ENCODE measurements at regions of chr2 and their contacts with region 1.

Region 1: GRCh38 chr2:182077451-182078142 is 91.9 kb downstream of the PPP1R1C start:
- DNase-seq: peak in 2 of 5 donors; percentile 30 to 35
- ATAC-seq: peak; percentile 84 to 96 (median 91)
- H3K4me3 ChIP-seq: no peak overlapping the region
- H3K27ac ChIP-seq: no peak overlapping the region
- H3K4me1 ChIP-seq: peaks cover 0 to 10% (median 3%) of the 10 kb centered on the region in 12 donors
- H3K27me3 ChIP-seq: no peaks in the 10 kb centered on the region
- CTCF ChIP-seq: peak; percentile 48 to 80 (median 70)
- POLR2A ChIP-seq: no peak

Region 2: DNA sequence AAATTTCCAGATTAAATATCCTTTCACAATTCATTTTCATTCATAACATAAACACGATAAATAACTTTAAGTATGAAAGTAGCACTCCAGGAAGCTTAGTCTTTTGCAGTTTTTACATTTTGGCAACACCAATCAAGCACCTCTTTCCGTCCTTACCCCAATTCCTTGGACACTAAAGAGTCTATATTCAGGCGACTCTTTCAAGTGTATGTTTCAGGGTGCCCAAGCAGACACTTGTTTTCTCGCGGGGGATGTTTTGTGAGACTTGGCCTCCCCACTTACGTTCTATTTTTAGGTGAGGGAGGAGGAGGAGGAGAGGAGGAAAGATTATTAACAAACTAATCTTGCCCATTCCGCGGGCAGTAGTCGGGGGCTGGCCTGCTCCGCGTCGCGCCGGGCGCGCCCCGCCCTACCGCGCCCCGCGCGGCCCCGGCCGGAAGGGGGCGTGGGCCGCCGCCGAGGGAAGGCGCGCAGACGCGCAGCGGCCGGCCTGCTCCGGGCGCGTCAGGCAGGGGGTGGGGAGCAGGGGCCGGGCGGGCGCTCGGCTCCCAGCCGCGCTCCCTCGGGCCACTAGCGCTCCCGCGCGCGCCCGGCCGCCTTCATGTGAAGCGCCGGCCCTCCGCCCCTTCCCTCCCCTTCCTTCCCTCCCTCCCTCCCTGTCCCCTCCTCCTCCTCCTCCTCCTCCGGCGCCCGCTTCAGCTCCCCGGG is 186.2 kb before region 1 on chr2 and contains the start of gene ITPRID2:
- intact Hi-C with region 1: loop called in 2 of 10 experiments (anchors 2 to 5 kb)
- DNase-seq: peak; percentile 90 to 94 (median 92)
- ATAC-seq: peak; percentile 85 to 98 (median 94)
- H3K4me3 ChIP-seq: peak within 1 kb of the TSS; percentile 71 to 94 (median 86)
- H3K27ac ChIP-seq: peak within 1 kb of the TSS; percentile 94 to 98 (median 98)
- H3K4me1 ChIP-seq: peaks cover 7 to 50% (median 36%) of the 10 kb centered on the region in 12 donors
- H3K27me3 ChIP-seq: no peaks in the 10 kb centered on the region
- CTCF ChIP-seq: peak in 8 of 12 donors; percentile 16 to 41 (median 22)
- POLR2A ChIP-seq: peak in 1 of 2 donors; percentile 27
- total RNA-seq, gene ITPRID2: 37.8 to 85.9 (median 59.8) TPM

Region 3: DNA sequence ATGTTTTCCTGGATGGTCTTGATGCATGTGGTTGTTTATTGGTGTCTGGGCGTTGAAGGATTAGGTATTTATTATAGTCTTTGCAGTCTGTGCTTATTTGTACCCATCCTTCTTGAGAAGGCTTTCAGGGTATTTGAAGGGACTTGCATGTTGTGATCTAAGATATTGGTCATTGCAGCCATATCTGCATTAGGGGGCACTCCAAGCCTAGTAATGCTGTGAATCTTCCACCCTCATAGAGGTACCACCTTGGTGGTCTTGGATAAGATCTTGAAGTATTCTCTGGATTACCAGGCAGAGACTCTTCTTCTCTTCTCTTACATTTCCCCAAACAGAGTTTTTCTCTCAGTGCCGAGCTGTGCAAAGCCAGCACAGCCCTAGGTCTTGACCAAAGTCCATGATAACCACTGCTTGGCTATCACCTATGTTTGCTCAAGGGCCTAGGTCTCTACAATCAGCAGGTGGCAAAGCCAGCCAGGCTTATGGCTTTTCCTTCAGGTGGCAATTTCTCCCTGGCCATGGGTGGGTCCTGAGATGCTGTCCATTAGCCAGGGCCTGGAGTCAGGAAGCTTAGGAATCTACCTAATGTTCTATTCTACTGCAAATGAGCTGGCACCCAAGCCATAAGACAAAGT is 107.3 kb before region 1 on chr2:
- intact Hi-C with region 1: loop called in 3 of 10 experiments (anchors 5 to 10 kb)
- DNase-seq: no peak
- ATAC-seq: no peak
- H3K4me3 ChIP-seq: no peak overlapping the region
- H3K27ac ChIP-seq: no peak overlapping the region
- H3K4me1 ChIP-seq: no peaks in the 10 kb centered on the region
- H3K27me3 ChIP-seq: no peaks in the 10 kb centered on the region
- CTCF ChIP-seq: peak in 6 of 12 donors; percentile 13 to 32 (median 18)
- POLR2A ChIP-seq: no peak

Region 4: GRCh38 chr2:181984814-181985631 is 92.6 kb before region 1 on chr2:
- intact Hi-C with region 1: loop called in 2 of 10 experiments (anchors 5 to 10 kb)
- DNase-seq: no peak
- ATAC-seq: peak; percentile 62 to 74 (median 72)
- H3K4me3 ChIP-seq: peak overlapping the region in 9 of 12 donors; percentile 17 to 54 (median 46)
- H3K27ac ChIP-seq: peak overlapping the region; percentile 7 to 86 (median 77)
- H3K4me1 ChIP-seq: peaks cover 0 to 29% (median 13%) of the 10 kb centered on the region in 12 donors
- H3K27me3 ChIP-seq: no peaks in the 10 kb centered on the region
- CTCF ChIP-seq: no peak
- POLR2A ChIP-seq: no peak

Region 5: DNA sequence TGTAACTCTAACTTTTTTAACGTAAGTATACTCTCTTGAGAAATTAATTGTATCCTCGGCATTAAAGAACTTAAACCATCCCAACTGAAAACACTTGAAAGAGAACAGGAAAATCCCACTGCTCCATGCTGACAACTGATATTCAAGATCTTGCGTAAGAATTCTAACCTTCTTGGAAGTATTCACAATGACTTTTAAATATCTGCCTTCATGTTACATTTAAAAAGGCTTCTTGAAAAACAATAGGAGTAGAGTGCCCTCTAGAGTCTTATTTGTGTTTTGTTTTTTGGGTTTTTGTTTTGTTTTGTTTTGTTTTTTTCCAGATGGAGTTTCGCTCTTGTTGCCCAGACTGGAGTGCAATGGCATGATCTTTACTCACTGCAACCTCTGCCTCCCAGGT is 573.1 kb after region 1 on chr2:
- intact Hi-C with region 1: loop called in 1 of 10 experiments (anchors 10 kb)
- DNase-seq: no peak
- ATAC-seq: peak in 2 of 4 donors; percentile 53 to 70
- H3K4me3 ChIP-seq: no peak overlapping the region
- H3K27ac ChIP-seq: no peak overlapping the region
- H3K4me1 ChIP-seq: peaks cover 0 to 14% (median 0%) of the 10 kb centered on the region in 12 donors
- H3K27me3 ChIP-seq: no peaks in the 10 kb centered on the region
- CTCF ChIP-seq: peak; percentile 37 to 68 (median 57)
- POLR2A ChIP-seq: no peak

Measured in heart left ventricle (tissue), 16 donors.